ENCODE measurements at regions of chr17 and their contacts with region 1.

Region 1: DNA sequence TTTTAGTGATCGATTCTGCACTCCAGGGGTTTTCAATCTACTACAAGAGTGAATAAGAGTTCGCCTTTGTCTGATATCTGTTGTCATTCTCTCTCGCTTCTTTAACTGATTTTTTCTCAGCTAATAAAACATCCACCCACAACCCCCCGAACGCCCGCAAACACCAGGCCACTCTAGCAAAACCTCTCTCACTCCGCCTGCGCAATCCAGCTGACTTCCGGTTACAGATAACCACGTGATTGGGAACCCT is 338 bp upstream of the RPL19 start:
- DNase-seq: peak; percentile 98 to 100
- ATAC-seq: peak; percentile 41 to 57; a peak in 4 of 6 replicates
- H3K4me3 ChIP-seq: peak overlapping the region; percentile 96
- H3K27ac ChIP-seq: peak overlapping the region; percentile 96
- H3K4me1 ChIP-seq: peaks cover 47% of the 10 kb centered on the region
- CTCF ChIP-seq: no peak
- EP300 ChIP-seq: no peak
- POLR2A ChIP-seq: peak; percentile 30; the same call in 1 of the 2 replicates
- RAD21 ChIP-seq: no peak

Region 2: GRCh38 chr17:39132192-39132610 is 67.5 kb before region 1 on chr17:
- CTCF ChIA-PET with region 1: no interaction called
- POLR2A ChIA-PET with region 1: no interaction called
- DNase-seq: peak in 1 of 2 experiments; percentile 51
- ATAC-seq: peak; percentile 60 to 65; a peak in 3 of 6 replicates
- H3K4me3 ChIP-seq: no peak overlapping the region
- H3K27ac ChIP-seq: peak overlapping the region in 1 of 2 experiments; percentile 49; a peak in 3 of 6 replicates
- H3K4me1 ChIP-seq: 0 out of 3 replicates have a peak, but pooled peaks cover 8% of the 10 kb centered on the region
- CTCF ChIP-seq: no peak
- EP300 ChIP-seq: no peak
- POLR2A ChIP-seq: no peak
- RAD21 ChIP-seq: no peak

Region 3: GRCh38 chr17:39164675-39165143 is 35.0 kb before region 1 on chr17:
- CTCF ChIA-PET with region 1: interaction called, 28 read pairs
- POLR2A ChIA-PET with region 1: interaction called, 21 read pairs
- DNase-seq: peak; percentile 91 to 99
- ATAC-seq: peak; percentile 81 to 92
- H3K4me3 ChIP-seq: peak overlapping the region; percentile 16; the same call in 2 of the 3 replicates
- H3K27ac ChIP-seq: peak overlapping the region in 1 of 2 experiments; percentile 51; a peak in 3 of 6 replicates
- H3K4me1 ChIP-seq: peaks cover 6% of the 10 kb centered on the region; the same call in 2 of the 3 replicates
- CTCF ChIP-seq: peak; percentile 84
- EP300 ChIP-seq: no peak
- POLR2A ChIP-seq: no peak
- RAD21 ChIP-seq: peak; percentile 42 to 61; a peak in 3 of 5 replicates

Region 4: GRCh38 chr17:39174907-39175694 is 24.6 kb before region 1 on chr17:
- CTCF ChIA-PET with region 1: interaction called, 115 read pairs
- POLR2A ChIA-PET with region 1: interaction called, 4 read pairs
- DNase-seq: peak; percentile 79 to 90
- ATAC-seq: peak; percentile 64 to 86; a peak in 5 of 6 replicates
- H3K4me3 ChIP-seq: no peak overlapping the region
- H3K27ac ChIP-seq: no peak overlapping the region
- H3K4me1 ChIP-seq: peaks cover 12% of the 10 kb centered on the region
- CTCF ChIP-seq: peak; percentile 90
- EP300 ChIP-seq: no peak
- POLR2A ChIP-seq: no peak
- RAD21 ChIP-seq: peak; percentile 58 to 71

Region 5: DNA sequence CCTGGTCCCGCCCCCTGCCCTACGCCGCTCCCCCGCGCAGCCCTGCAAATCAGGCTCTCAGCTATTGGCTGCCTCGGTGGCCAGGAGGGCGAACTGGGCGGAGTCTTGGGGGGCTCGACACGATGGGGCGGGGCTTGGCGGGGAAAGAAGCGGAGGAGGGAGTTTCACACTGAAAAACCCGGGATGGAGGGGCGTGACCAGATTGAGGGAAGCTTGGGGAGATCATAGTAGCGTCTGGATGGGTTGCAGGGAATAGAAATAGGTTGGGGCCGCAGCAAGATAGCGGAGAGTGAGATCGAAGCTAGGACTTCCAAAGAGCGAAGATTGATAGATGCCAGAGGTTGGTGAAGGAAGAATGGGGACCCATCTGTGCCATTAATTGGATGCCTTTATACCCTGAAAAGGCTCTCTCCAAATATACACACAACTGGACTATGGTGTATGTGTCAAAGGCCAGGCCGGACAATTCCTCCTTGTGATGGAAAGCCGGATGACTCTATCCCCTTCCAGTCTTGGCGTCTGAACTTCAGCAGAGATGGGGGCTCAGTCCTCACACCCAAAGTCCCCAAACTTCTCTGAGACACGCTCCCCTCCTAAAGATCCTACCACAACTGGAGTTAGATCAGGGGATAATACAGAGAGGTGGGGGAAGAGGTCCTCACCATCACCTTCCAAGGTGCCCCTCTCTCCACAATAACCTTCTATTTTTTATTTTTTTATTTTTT is 26.4 kb after region 1 on chr17:
- CTCF ChIA-PET with region 1: interaction called, 1,140 read pairs
- POLR2A ChIA-PET with region 1: interaction called, 10 read pairs
- DNase-seq: peak; percentile 60 to 91
- ATAC-seq: peak; percentile 26 to 86; a peak in 5 of 6 replicates
- H3K4me3 ChIP-seq: peak overlapping the region; percentile 46
- H3K27ac ChIP-seq: peak overlapping the region; percentile 40 to 71; a peak in 5 of 6 replicates
- H3K4me1 ChIP-seq: peaks cover 28% of the 10 kb centered on the region
- CTCF ChIP-seq: no peak
- EP300 ChIP-seq: no peak
- POLR2A ChIP-seq: no peak
- RAD21 ChIP-seq: no peak

Region 6: GRCh38 chr17:39235555-39236449 is 36.1 kb after region 1 on chr17:
- CTCF ChIA-PET with region 1: interaction called, 1,140 read pairs
- POLR2A ChIA-PET with region 1: interaction called, 16 read pairs
- DNase-seq: peak; percentile 89 to 92
- ATAC-seq: peak; percentile 68 to 85
- H3K4me3 ChIP-seq: no peak overlapping the region
- H3K27ac ChIP-seq: peak overlapping the region; percentile 45 to 61; a peak in 3 of 6 replicates
- H3K4me1 ChIP-seq: peaks cover 48% of the 10 kb centered on the region
- CTCF ChIP-seq: peak; percentile 93
- EP300 ChIP-seq: no peak
- POLR2A ChIP-seq: no peak
- RAD21 ChIP-seq: peak; percentile 22 to 31; a peak in 1 of 5 replicates

Region 7: GRCh38 chr17:39401412-39402243 is 201.9 kb after region 1 on chr17 and contains the start of gene FBXL20:
- CTCF ChIA-PET with region 1: no interaction called
- POLR2A ChIA-PET with region 1: interaction called, 12 read pairs
- DNase-seq: peak; percentile 91 to 98
- ATAC-seq: peak; percentile 76 to 83
- H3K4me3 ChIP-seq: peak within 1 kb of the TSS; percentile 90
- H3K27ac ChIP-seq: peak within 1 kb of the TSS; percentile 84 to 95
- H3K4me1 ChIP-seq: peaks cover 45% of the 10 kb centered on the region
- CTCF ChIP-seq: no peak
- EP300 ChIP-seq: no peak; a peak in 1 of 5 replicates
- POLR2A ChIP-seq: peak; percentile 34
- RAD21 ChIP-seq: no peak
- polyA plus RNA-seq, gene FBXL20: 6.7 and 12.2 TPM in 2 replicates

Region 8: DNA sequence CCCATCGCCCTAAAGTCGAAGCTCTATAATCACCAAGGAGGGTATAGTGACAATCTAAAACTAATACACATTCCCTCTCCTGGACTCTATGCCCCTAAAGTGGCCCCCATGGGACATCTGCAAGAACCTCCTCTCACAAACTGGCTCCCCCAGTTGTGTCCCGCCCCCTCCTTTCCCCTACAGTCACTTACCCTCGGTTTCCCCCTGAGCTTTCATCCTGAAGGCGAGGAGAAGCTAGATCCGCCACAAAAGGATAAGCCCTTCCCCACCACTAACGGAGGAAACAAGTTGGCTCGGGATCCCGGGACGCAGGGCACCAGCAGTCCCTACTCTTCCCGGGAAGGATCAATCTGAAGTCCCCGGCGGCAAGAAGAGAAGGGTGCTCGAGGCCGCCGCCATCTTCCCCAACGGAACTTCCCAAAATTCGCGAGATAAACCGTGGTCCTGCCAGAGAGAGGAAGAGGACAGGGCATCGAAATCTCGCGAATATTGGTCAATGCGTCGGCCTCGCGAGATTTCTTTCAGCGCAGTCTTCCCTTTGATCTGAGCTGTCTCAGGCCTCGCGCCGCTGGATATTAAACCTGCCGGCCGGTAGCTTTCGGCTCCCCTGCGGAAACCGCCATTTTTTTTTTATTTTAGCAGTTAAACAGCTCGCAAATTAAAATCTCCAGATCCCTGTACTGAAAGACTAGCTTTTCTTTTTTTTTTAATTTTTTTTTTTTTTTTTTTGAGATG is 251.3 kb after region 1 on chr17 and contains the start of gene MED1:
- CTCF ChIA-PET with region 1: no interaction called
- POLR2A ChIA-PET with region 1: interaction called, 12 read pairs
- DNase-seq: peak; percentile 99 to 100
- ATAC-seq: peak; percentile 98 to 99
- H3K4me3 ChIP-seq: peak within 1 kb of the TSS; percentile 72
- H3K27ac ChIP-seq: peak within 1 kb of the TSS; percentile 88 to 92
- H3K4me1 ChIP-seq: peaks cover 21% of the 10 kb centered on the region; the same call in 2 of the 3 replicates
- CTCF ChIP-seq: no peak
- EP300 ChIP-seq: no peak
- POLR2A ChIP-seq: peak; percentile 78
- RAD21 ChIP-seq: no peak
- polyA plus RNA-seq, gene MED1: 74.9 and 76.2 TPM in 2 replicates